CD8-positive, alpha-beta T cell (primary cell): ENCODE measurements at regions of chr2 and their contacts with region 1.

Region 1: DNA sequence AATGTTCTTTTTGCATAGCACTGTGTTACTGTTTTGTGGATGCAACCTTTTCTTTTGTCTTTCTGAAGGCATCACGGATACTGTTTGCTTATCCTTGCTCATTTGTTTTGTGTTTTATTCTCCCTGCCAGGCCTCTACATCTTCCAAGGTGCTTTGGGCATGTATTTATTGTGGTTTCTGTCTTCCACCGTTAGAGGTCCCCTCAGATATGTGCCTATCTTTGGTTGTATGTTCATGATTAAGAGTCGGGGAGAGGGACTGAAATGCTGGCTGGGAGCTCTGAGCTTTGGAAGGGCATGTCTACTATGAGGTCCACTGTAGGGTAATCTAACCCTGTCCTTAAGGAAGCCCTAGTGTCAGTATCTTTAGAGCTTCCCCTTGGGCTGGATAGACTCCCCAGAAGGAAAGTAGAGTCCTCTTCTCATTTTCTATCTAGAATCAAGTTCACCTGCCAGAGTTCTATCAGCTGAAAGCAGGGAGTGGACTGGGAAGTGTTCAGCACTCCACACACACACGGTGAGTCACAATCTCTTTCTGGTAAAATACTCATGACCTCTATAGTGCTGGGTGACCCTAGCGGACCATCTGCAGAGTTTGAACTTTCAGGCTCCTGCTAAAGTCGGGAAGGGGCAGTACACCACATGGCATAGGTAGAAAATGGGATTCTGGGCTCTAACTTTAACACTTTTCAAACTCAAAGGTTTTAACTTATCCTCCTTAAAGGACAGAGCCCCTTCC is 43.5 kb downstream of the SAP130 start:
- DNase-seq: no peak
- ATAC-seq: no peak
- H3K4me3 ChIP-seq: no peak overlapping the region
- H3K4me3 Mint-ChIP-seq: no peak overlapping the region
- H3K27ac ChIP-seq: no peak overlapping the region
- H3K27ac Mint-ChIP-seq: no peak overlapping the region
- H3K4me1 ChIP-seq: no peaks in the 10 kb centered on the region
- H3K4me1 Mint-ChIP-seq: no peaks in the 10 kb centered on the region
- H3K27me3 ChIP-seq: no peaks in the 10 kb centered on the region
- H3K27me3 Mint-ChIP-seq: no peaks in the 10 kb centered on the region
- CTCF ChIP-seq: no peak

Region 2: GRCh38 chr2:127884436-127885345 is 99.7 kb before region 1 on chr2:
- CTCF ChIA-PET with region 1: no interaction called
- POLR2A ChIA-PET with region 1: no interaction called
- intact Hi-C with region 1: no loop called
- DNase-seq: peak in 1 of 9 experiments; percentile 9
- ATAC-seq: no peak
- H3K4me3 ChIP-seq: peak overlapping the region; percentile 38
- H3K4me3 Mint-ChIP-seq: peak overlapping the region; percentile 86
- H3K27ac ChIP-seq: no peak overlapping the region
- H3K27ac Mint-ChIP-seq: peak overlapping the region; percentile 87
- H3K4me1 ChIP-seq: peaks cover 22% of the 10 kb centered on the region
- H3K4me1 Mint-ChIP-seq: peaks cover 66% of the 10 kb centered on the region
- H3K27me3 ChIP-seq: no peaks in the 10 kb centered on the region
- H3K27me3 Mint-ChIP-seq: no peaks in the 10 kb centered on the region
- CTCF ChIP-seq: no peak

Region 3: DNA sequence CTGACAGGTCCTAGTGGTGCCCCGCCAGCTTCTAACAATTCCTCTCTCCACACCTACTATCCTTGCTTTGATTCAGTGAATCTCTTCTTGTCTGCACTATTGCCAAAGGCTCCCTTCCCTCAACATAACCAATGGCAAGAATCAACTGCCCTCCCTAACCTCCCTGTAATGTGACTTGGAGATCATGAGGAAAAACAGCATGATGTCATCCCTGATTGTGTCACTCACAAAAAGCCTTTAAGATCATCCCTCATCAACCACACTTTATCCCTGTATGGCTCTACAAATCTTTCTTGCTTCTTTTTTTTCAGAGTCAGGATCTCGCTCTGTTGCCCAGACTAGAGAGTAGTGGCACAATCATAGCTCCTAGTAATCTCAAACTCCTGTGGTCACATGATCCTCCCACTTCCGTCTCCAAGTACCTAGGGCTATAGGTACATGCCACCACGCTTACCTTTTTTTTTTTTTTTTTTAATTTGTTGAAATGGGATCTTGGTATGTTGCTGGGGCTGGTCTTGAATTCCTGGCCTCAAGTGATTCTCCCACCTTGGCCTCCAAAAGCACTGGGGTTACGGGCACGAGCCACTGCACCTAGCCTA is 23.8 kb after region 1 on chr2:
- CTCF ChIA-PET with region 1: no interaction called
- POLR2A ChIA-PET with region 1: no interaction called
- intact Hi-C with region 1: loop called in 1 of 2 experiments (anchors 1 kb)
- DNase-seq: no peak
- ATAC-seq: no peak
- H3K4me3 ChIP-seq: no peak overlapping the region
- H3K4me3 Mint-ChIP-seq: no peak overlapping the region
- H3K27ac ChIP-seq: no peak overlapping the region
- H3K27ac Mint-ChIP-seq: no peak overlapping the region
- H3K4me1 ChIP-seq: no peaks in the 10 kb centered on the region
- H3K4me1 Mint-ChIP-seq: peaks cover 2% of the 10 kb centered on the region
- H3K27me3 ChIP-seq: no peaks in the 10 kb centered on the region
- H3K27me3 Mint-ChIP-seq: no peaks in the 10 kb centered on the region
- CTCF ChIP-seq: no peak